MCF 10A (cell line): ENCODE measurements at regions of chr15 and their contacts with region 1.

Region 1: GRCh38 chr15:96330450-96331145 is at the start of gene NR2F2:
- DNase-seq: peak; percentile 97
- H3K4me3 Mint-ChIP-seq: peak within 1 kb of the TSS; percentile 84
- H3K27ac Mint-ChIP-seq: peak within 1 kb of the TSS; percentile 98
- H3K4me1 Mint-ChIP-seq: peaks cover 18% of the 10 kb centered on the region
- H3K27me3 Mint-ChIP-seq: no peaks in the 10 kb centered on the region
- CTCF ChIP-seq: no peak
- total RNA-seq, gene NR2F2: 9.6 and 10.9 TPM in 2 replicates

Region 2: GRCh38 chr15:95025924-95026728 is 1304.5 kb before region 1 on chr15:
- CTCF ChIA-PET with region 1: interaction called, 12 read pairs
- POLR2A ChIA-PET with region 1: no interaction called
- intact Hi-C with region 1: loop called (anchors 5 kb)
- DNase-seq: peak; percentile 73
- H3K4me3 Mint-ChIP-seq: no peak overlapping the region
- H3K27ac Mint-ChIP-seq: no peak overlapping the region
- H3K4me1 Mint-ChIP-seq: no peaks in the 10 kb centered on the region
- H3K27me3 Mint-ChIP-seq: no peaks in the 10 kb centered on the region
- CTCF ChIP-seq: peak; percentile 78

Region 3: DNA sequence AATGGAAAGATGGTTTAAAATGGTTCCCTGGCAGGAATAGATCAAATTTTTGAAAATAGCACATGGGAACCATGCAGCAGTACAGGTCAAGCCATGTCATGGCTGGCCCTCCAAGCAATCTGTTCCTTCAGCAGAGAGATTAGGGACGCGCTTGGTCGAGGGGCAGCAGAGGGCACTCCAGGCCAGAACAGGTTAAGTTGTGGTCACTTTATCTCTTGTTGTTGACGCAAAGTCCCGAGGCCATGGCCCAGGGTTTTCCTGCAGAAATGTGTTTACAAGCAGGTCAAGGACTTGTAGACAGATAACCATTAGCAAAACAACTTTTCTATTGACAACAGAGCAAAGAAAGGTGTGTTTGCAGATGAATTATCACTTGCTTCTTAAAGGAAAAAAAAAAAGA is 570.1 kb before region 1 on chr15:
- CTCF ChIA-PET with region 1: interaction called, 3 read pairs
- POLR2A ChIA-PET with region 1: no interaction called
- intact Hi-C with region 1: loop called (anchors 5 kb)
- DNase-seq: peak; percentile 4
- H3K4me3 Mint-ChIP-seq: no peak overlapping the region
- H3K27ac Mint-ChIP-seq: no peak overlapping the region
- H3K4me1 Mint-ChIP-seq: no peaks in the 10 kb centered on the region
- H3K27me3 Mint-ChIP-seq: no peaks in the 10 kb centered on the region
- CTCF ChIP-seq: no peak

Region 4: GRCh38 chr15:96230465-96231181 is 100.0 kb before region 1 on chr15:
- CTCF ChIA-PET with region 1: interaction called, 5 read pairs
- POLR2A ChIA-PET with region 1: interaction called, 7 read pairs
- intact Hi-C with region 1: loop called (anchors 2 kb)
- DNase-seq: peak; percentile 45
- H3K4me3 Mint-ChIP-seq: no peak overlapping the region
- H3K27ac Mint-ChIP-seq: peak overlapping the region; percentile 49
- H3K4me1 Mint-ChIP-seq: peaks cover 34% of the 10 kb centered on the region
- H3K27me3 Mint-ChIP-seq: no peaks in the 10 kb centered on the region
- CTCF ChIP-seq: no peak

Region 5: GRCh38 chr15:96356494-96357455 is 26.2 kb after region 1 on chr15:
- CTCF ChIA-PET with region 1: interaction called, 28 read pairs
- POLR2A ChIA-PET with region 1: interaction called, 12 read pairs
- intact Hi-C with region 1: loop called (anchors 1 kb)
- DNase-seq: peak; percentile 75
- H3K4me3 Mint-ChIP-seq: peak overlapping the region; percentile 73
- H3K27ac Mint-ChIP-seq: no peak overlapping the region
- H3K4me1 Mint-ChIP-seq: peaks cover 5% of the 10 kb centered on the region
- H3K27me3 Mint-ChIP-seq: no peaks in the 10 kb centered on the region
- CTCF ChIP-seq: peak; percentile 95

Region 6: GRCh38 chr15:96606617-96607016 is 276.0 kb after region 1 on chr15:
- CTCF ChIA-PET with region 1: no interaction called
- POLR2A ChIA-PET with region 1: no interaction called
- intact Hi-C with region 1: no loop called
- DNase-seq: no peak
- H3K4me3 Mint-ChIP-seq: no peak overlapping the region
- H3K27ac Mint-ChIP-seq: no peak overlapping the region
- H3K4me1 Mint-ChIP-seq: no peaks in the 10 kb centered on the region
- H3K27me3 Mint-ChIP-seq: peaks cover 21% of the 10 kb centered on the region
- CTCF ChIP-seq: no peak

Region 7: DNA sequence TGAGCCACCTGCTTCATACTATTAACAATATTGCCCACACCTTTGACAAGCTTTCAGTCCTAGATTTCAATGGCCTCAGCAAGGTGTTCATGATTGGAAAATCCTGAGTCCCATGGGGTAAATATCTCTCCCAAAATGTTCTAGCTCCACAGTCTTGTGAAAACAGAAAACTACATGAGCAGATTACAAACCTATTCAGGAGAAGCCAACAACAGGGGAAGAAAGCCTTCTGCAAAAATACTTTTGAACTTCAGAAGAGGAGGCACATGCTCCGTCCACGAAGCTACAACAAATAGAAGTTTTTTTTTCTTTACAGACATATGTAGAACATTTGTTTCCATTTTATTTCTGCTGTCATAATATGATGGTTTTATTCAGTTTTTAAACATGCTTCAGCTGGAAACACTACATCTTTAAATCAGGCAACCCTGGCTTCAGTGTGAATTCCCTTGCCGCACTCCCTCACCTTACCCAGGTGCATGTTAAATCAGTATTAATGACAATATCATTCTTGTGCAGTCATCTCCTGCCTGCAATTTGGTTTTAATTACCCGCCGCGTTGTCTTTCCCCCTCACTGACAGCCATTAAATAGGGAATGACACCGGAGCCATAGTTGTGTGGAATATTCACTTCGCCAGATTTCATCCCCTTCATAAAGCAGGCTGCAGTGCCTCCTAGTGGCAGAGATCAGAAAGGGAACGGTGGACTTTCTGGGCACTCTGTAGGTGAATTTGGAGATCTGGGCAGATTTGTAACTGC is 904.4 kb after region 1 on chr15:
- CTCF ChIA-PET with region 1: interaction called, 19 read pairs
- POLR2A ChIA-PET with region 1: interaction called, 4 read pairs
- intact Hi-C with region 1: loop called (anchors 2 kb)
- DNase-seq: peak; percentile 61
- H3K4me3 Mint-ChIP-seq: no peak overlapping the region
- H3K27ac Mint-ChIP-seq: no peak overlapping the region
- H3K4me1 Mint-ChIP-seq: peaks cover 17% of the 10 kb centered on the region
- H3K27me3 Mint-ChIP-seq: peaks cover 70% of the 10 kb centered on the region
- CTCF ChIP-seq: peak; percentile 79